Tibial artery (tissue), 4 donors: ENCODE measurements at regions of chr5 and their contacts with region 1.

Region 1: GRCh38 chr5:149834246-149834855 is 104.2 kb downstream of the PPARGC1B start:
- DNase-seq: peak in 1 of 2 donors; percentile 41
- H3K4me3 ChIP-seq: no peak overlapping the region
- H3K27ac ChIP-seq: no peak overlapping the region
- H3K4me1 ChIP-seq: no peaks in the 10 kb centered on the region
- H3K27me3 ChIP-seq: no peaks in the 10 kb centered on the region
- CTCF ChIP-seq: peak; percentile 62 to 73

Region 2: GRCh38 chr5:149960272-149961185 is 126.2 kb after region 1 on chr5 and contains the start of gene SLC26A2:
- intact Hi-C with region 1: loop called (anchors 5 kb)
- DNase-seq: peak; percentile 99
- H3K4me3 ChIP-seq: peak within 1 kb of the TSS; percentile 68 to 81
- H3K27ac ChIP-seq: peak within 1 kb of the TSS; percentile 87 to 96
- H3K4me1 ChIP-seq: peaks cover 0 to 27% (median 11%) of the 10 kb centered on the region in 4 donors
- H3K27me3 ChIP-seq: no peaks in the 10 kb centered on the region
- CTCF ChIP-seq: peak in 1 of 2 experiments; percentile 25

Region 3: DNA sequence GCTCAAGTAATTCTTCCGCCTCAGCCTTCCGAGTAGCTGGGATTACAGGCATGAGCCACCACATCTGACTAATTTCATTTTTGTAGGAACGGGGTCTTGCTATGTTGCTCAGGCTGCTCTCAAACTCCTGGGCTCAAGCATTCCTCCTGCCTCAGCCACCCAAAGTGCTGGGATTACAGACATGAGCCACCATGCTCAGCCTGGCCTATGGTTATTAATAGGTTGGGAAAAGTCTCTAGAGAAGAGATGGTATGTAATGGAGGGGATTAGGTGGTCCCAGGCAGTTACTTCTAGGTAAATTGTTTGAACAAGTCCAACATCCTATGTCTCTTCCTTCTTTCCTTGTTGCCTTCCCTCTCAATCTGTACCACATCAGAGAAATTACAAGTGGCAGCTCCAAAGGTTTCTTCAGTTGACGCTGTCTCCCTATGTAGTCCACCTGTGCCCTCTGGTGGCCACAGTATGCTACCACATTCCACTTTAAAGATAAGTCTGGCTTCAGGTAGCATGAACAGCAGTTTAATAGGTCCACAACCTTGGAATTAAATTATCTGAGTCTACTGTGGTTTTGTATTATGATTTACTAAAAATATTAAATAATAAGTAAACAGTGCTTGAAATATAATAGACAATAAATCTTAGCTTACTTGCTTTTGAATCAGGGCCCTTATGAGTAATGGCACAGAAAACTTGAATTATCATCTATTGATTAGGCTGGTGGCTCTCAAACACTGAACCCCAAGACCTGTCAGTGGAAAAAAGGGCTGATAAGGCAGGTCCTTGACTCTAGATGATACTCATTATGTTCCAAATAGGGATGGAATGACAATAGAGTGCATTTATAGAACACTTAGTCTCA is 156.4 kb after region 1 on chr5:
- intact Hi-C with region 1: loop called (anchors 5 kb)
- DNase-seq: peak; percentile 80 to 82
- H3K4me3 ChIP-seq: no peak overlapping the region
- H3K27ac ChIP-seq: no peak overlapping the region
- H3K4me1 ChIP-seq: peaks cover 0 to 24% (median 0%) of the 10 kb centered on the region in 4 donors
- H3K27me3 ChIP-seq: no peaks in the 10 kb centered on the region
- CTCF ChIP-seq: peak; percentile 92 to 94